ENCODE measurements at regions of chr18 and their contacts with region 1.

Region 1: DNA sequence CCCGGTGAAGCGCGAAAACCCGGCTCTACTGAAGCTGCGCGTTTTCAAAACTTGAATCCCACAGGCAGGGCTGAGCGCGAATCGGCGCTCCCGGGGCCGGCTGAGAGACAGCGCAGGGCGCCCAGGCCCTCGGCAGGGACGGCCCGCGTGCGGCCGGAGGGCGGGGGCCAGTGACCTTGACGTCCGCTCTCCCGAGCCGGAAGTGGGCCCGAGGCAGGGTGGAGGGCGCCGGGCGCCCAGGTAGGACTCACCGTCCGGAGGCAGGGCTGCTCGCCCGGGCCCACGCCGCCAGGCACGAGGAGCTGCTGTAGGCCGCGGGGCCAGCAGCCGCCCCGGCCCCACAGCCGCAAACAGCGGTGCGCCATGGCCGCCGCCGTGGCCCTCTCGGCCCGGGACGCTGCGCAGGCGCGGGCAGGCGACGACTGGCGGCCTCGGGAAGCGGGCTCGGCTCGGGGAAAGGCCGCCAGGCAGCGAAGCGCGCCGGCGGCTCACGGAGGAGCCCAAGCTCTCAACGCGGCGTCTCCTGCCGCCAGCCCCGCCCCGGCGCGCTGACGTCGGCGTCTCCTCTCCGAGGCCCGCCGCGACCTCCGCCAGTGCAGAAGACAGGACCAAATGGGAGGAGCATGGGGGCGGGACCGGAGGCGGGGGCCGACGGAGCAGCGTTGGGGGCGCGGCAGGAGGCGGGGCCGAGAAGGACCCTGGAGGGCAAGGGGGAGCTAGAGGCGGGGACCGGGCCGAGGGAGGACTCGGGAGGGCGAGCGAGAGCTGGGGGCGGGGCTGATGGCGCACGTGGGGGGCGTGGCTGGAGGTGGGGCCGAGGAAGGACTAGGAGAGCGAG is at the start of gene AFG3L2:
- DNase-seq: peak; percentile 100
- H3K4me3 ChIP-seq: peak within 1 kb of the TSS; percentile 92
- H3K4me3 Mint-ChIP-seq: peak within 1 kb of the TSS; percentile 80
- H3K27ac Mint-ChIP-seq: peak within 1 kb of the TSS; percentile 92
- H3K4me1 ChIP-seq: peaks cover 8% of the 10 kb centered on the region; the same call in 1 of the 2 replicates
- H3K4me1 Mint-ChIP-seq: no peaks in the 10 kb centered on the region
- H3K27me3 ChIP-seq: no peaks in the 10 kb centered on the region
- H3K27me3 Mint-ChIP-seq: no peaks in the 10 kb centered on the region
- CTCF ChIP-seq: no peak
- total RNA-seq, gene AFG3L2: 69.8 and 72.0 TPM in 2 replicates

Region 2: GRCh38 chr18:12271376-12272235 is 105.3 kb before region 1 on chr18:
- CTCF ChIA-PET with region 1: interaction called, 13 read pairs
- POLR2A ChIA-PET with region 1: no interaction called
- intact Hi-C with region 1: no loop called
- DNase-seq: peak; percentile 81 to 88
- H3K4me3 ChIP-seq: peak overlapping the region; percentile 44
- H3K4me3 Mint-ChIP-seq: peak overlapping the region; percentile 79
- H3K27ac Mint-ChIP-seq: peak overlapping the region; percentile 56
- H3K4me1 ChIP-seq: no peaks in the 10 kb centered on the region
- H3K4me1 Mint-ChIP-seq: no peaks in the 10 kb centered on the region
- H3K27me3 ChIP-seq: no peaks in the 10 kb centered on the region
- H3K27me3 Mint-ChIP-seq: no peaks in the 10 kb centered on the region
- CTCF ChIP-seq: peak; percentile 80 to 84

Region 3: DNA sequence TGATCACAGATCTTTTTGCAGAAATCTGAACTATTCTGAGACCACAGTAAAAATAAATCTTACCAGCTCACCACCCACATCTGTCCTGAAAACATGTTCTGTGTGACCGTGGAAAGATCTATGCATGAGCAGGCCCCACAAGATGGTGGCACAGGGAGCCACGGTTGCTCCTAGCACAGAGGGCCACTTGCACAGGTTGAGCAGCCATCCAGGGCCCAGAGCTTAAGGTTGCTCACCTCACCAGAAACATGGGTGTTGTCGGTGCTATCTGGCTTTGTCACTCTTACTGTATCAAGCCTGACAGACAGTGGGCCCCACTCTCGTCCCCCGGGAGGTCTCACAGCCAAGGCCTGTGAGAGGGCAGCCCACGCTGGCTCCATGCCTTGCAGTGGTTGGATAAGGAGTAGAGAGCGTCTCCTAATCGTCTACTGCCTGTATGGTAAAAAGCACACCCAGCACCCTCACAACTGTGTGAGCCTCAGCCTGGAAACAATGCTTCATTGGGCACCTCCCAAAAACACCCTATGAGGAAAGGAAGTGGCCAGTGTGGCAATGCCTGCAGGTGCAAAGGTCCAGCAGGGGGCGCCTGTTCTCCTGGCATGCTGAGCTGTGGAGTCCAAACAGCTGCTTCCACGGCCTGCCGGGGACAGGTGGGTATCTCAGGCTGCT is 49.3 kb before region 1 on chr18:
- CTCF ChIA-PET with region 1: interaction called, 5 read pairs
- POLR2A ChIA-PET with region 1: interaction called, 8 read pairs
- intact Hi-C with region 1: loop called (anchors 2 kb)
- DNase-seq: peak; percentile 77 to 86
- H3K4me3 ChIP-seq: no peak overlapping the region
- H3K4me3 Mint-ChIP-seq: no peak overlapping the region
- H3K27ac Mint-ChIP-seq: peak overlapping the region; percentile 22
- H3K4me1 ChIP-seq: no peaks in the 10 kb centered on the region
- H3K4me1 Mint-ChIP-seq: no peaks in the 10 kb centered on the region
- H3K27me3 ChIP-seq: no peaks in the 10 kb centered on the region
- H3K27me3 Mint-ChIP-seq: no peaks in the 10 kb centered on the region
- CTCF ChIP-seq: peak; percentile 80 to 82

Region 4: DNA sequence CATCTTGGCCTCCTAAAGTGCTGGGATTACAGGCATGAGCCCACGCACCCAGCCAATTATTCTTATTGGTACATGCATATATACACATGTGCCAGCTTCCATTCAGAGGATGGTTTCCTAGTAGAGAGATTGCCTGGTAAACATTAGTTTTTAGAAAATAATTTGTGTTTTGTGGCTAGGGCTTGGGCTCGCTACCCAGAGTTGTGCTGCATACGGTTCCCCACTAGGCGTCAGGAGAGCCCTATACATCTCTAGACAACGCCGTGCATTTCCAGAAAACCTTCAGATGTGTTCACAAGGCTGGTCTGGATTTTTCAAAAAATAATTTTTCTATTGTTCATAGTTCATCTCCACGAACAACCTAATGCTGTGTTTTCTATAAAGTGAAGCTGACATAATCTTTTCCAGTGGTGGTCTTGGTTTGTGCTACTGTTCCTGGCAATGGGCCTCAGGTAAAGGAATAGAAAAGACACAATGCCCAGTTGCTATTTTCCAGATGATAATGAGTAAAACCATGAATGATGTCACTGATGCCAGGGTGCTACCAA is 14.8 kb after region 1 on chr18:
- CTCF ChIA-PET with region 1: interaction called, 5 read pairs
- POLR2A ChIA-PET with region 1: interaction called, 27 read pairs
- intact Hi-C with region 1: no loop called
- DNase-seq: peak; percentile 54 to 66
- H3K4me3 ChIP-seq: no peak overlapping the region
- H3K4me3 Mint-ChIP-seq: no peak overlapping the region
- H3K27ac Mint-ChIP-seq: no peak overlapping the region
- H3K4me1 ChIP-seq: peaks cover 10% of the 10 kb centered on the region; the same call in 1 of the 2 replicates
- H3K4me1 Mint-ChIP-seq: peaks cover 12% of the 10 kb centered on the region
- H3K27me3 ChIP-seq: no peaks in the 10 kb centered on the region
- H3K27me3 Mint-ChIP-seq: no peaks in the 10 kb centered on the region
- CTCF ChIP-seq: peak; percentile 88 to 96

Region 5: GRCh38 chr18:12470382-12471075 is 93.6 kb after region 1 on chr18:
- CTCF ChIA-PET with region 1: no interaction called
- POLR2A ChIA-PET with region 1: no interaction called
- intact Hi-C with region 1: no loop called
- DNase-seq: no peak
- H3K4me3 ChIP-seq: no peak overlapping the region
- H3K4me3 Mint-ChIP-seq: no peak overlapping the region
- H3K27ac Mint-ChIP-seq: no peak overlapping the region
- H3K4me1 ChIP-seq: no peaks in the 10 kb centered on the region
- H3K4me1 Mint-ChIP-seq: no peaks in the 10 kb centered on the region
- H3K27me3 ChIP-seq: no peaks in the 10 kb centered on the region
- H3K27me3 Mint-ChIP-seq: no peaks in the 10 kb centered on the region
- CTCF ChIP-seq: no peak

Region 6: GRCh38 chr18:12947355-12948041 is 570.6 kb after region 1 on chr18 and contains the start of gene SEH1L:
- CTCF ChIA-PET with region 1: no interaction called
- POLR2A ChIA-PET with region 1: interaction called, 5 read pairs
- intact Hi-C with region 1: loop called (anchors 2 kb)
- DNase-seq: peak; percentile 99
- H3K4me3 ChIP-seq: peak within 1 kb of the TSS; percentile 84
- H3K4me3 Mint-ChIP-seq: peak within 1 kb of the TSS; percentile 100
- H3K27ac Mint-ChIP-seq: peak within 1 kb of the TSS; percentile 100
- H3K4me1 ChIP-seq: peaks cover 19% of the 10 kb centered on the region
- H3K4me1 Mint-ChIP-seq: peaks cover 11% of the 10 kb centered on the region
- H3K27me3 ChIP-seq: no peaks in the 10 kb centered on the region
- H3K27me3 Mint-ChIP-seq: no peaks in the 10 kb centered on the region
- CTCF ChIP-seq: no peak
- total RNA-seq, gene SEH1L: 116 and 118 TPM in 2 replicates

Measured in Caco-2 (cell line).